ENCODE measurements at regions of chr13 and their contacts with region 1.

Region 1: GRCh38 chr13:24671386-24672107 is 8.7 kb upstream of the ATP12A start:
- DNase-seq: peak; percentile 82
- H3K4me3 ChIP-seq: peak overlapping the region in 1 of 2 experiments; percentile 28; a peak in 1 of 4 replicates
- H3K27ac ChIP-seq: no peak overlapping the region
- H3K4me1 ChIP-seq: peaks cover 0 to 7% of the 10 kb centered on the region in 2 experiments; a peak in 1 of 4 replicates
- H3K27me3 ChIP-seq: peaks cover 26% of the 10 kb centered on the region
- CTCF ChIP-seq: peak; percentile 76
- EP300 ChIP-seq: no peak
- RAD21 ChIP-seq: peak; percentile 77

Region 2: DNA sequence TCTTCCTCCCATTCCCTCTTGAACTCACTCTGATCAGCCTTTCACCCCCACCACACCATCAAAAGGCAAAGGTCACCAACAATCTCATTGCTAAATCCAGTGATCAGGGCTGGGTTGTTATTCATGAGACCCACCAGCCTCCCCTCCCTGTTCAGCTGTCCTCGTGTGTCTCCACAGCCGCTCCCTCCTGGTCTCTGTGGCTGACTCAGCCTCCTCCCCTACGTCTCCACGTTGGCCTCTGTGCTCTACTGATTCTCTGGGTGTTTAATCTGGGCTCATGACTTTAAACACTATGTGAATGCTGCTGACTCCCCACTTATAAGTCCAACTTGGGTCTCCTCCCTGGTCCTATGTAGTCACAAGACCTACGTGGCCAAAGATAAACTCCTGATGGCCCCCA is 197.9 kb before region 1 on chr13:
- CTCF ChIA-PET with region 1: no interaction called
- POLR2A ChIA-PET with region 1: no interaction called
- DNase-seq: no peak
- H3K4me3 ChIP-seq: no peak overlapping the region
- H3K27ac ChIP-seq: no peak overlapping the region
- H3K4me1 ChIP-seq: no peaks in the 10 kb centered on the region
- H3K27me3 ChIP-seq: no peaks in the 10 kb centered on the region
- CTCF ChIP-seq: no peak
- EP300 ChIP-seq: no peak
- RAD21 ChIP-seq: no peak

Region 3: GRCh38 chr13:24528816-24529398 is 142.6 kb before region 1 on chr13:
- CTCF ChIA-PET with region 1: no interaction called
- POLR2A ChIA-PET with region 1: no interaction called
- DNase-seq: no peak
- H3K4me3 ChIP-seq: no peak overlapping the region
- H3K27ac ChIP-seq: no peak overlapping the region
- H3K4me1 ChIP-seq: no peaks in the 10 kb centered on the region; a peak in 1 of 4 replicates
- H3K27me3 ChIP-seq: no peaks in the 10 kb centered on the region
- CTCF ChIP-seq: no peak
- EP300 ChIP-seq: no peak
- RAD21 ChIP-seq: no peak

Region 4: GRCh38 chr13:24654738-24655137 is 16.8 kb before region 1 on chr13:
- CTCF ChIA-PET with region 1: interaction called, 10 read pairs
- POLR2A ChIA-PET with region 1: no interaction called
- DNase-seq: no peak
- H3K4me3 ChIP-seq: no peak overlapping the region
- H3K27ac ChIP-seq: no peak overlapping the region
- H3K4me1 ChIP-seq: peaks cover 0 to 3% of the 10 kb centered on the region in 2 experiments; a peak in 1 of 4 replicates
- H3K27me3 ChIP-seq: no peaks in the 10 kb centered on the region
- CTCF ChIP-seq: no peak
- EP300 ChIP-seq: no peak
- RAD21 ChIP-seq: no peak

Region 5: DNA sequence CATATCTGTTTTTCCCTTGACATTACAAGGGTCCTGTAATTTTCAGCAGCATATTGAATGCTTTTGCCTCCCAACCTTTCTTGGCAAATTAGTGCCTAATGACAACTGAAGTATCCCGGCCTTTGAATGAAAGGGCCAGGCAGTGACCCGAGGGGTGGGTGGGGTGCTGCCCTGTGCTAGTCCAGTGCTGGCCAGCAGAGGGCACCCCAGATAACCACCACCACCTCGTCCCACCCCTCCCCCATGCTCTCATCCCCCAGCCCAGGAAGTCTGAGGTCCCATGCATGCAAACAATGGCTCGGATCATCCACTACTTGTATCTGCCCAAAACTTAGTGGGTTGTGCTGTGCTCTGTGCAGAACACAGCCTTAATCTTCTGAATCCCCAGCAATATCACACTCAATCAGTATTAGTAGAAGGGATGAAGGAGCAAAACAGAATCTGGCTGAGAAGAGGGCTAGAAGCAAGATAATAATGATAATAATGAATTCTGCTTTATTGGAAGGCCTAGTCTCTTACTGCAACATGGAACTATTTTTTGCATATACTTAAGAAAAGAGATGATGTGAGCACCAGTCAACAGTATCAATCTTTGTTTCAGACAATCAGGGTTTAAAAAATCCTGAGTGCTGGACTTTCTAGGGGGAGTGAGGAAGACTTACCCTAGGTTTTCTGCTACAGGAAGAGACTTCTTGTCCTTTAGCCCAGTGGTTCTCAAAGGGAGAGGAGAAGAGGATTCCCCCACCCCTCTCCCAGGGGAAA is 12.5 kb after region 1 on chr13:
- CTCF ChIA-PET with region 1: interaction called, 16 read pairs
- POLR2A ChIA-PET with region 1: no interaction called
- DNase-seq: peak; percentile 91
- H3K4me3 ChIP-seq: no peak overlapping the region; a peak in 1 of 4 replicates
- H3K27ac ChIP-seq: no peak overlapping the region
- H3K4me1 ChIP-seq: peaks cover 0 to 3% of the 10 kb centered on the region in 2 experiments; a peak in 2 of 4 replicates
- H3K27me3 ChIP-seq: peaks cover 38% of the 10 kb centered on the region
- CTCF ChIP-seq: peak; percentile 75
- EP300 ChIP-seq: no peak
- RAD21 ChIP-seq: peak; percentile 41; the same call in 1 of the 2 replicates

Region 6: DNA sequence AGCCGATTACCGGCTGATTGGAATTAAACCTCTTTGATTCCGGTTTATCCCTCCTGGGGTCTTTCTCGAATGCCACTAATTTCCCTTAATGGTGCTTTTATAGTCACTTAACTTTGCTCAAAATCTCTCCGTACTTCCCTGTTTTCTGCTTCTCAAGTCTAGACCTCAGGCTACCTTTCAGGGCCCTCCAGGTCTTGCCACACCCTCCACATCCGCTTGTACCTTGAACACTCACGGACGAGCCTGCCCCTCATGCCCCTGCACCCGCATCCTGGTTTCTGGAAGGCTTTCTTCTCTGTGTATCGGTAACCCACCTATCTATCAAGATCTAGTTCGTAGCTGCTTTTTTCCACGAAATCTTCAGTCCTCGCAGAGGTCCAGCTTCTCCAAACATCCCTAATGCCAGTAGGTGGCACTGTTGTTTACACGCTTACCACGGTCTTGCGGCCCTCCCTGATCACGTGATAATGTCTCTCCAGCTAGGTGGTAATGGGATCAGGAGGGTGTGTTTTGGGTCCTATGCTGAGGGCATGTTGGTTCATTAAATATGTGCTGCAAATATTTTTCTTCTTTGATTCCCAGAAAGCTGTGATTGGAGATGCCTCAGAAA is 22.4 kb after region 1 on chr13:
- CTCF ChIA-PET with region 1: interaction called, 11 read pairs
- POLR2A ChIA-PET with region 1: no interaction called
- DNase-seq: peak; percentile 84
- H3K4me3 ChIP-seq: peak overlapping the region in 1 of 2 experiments; percentile 29; a peak in 1 of 4 replicates
- H3K27ac ChIP-seq: no peak overlapping the region
- H3K4me1 ChIP-seq: no peaks in the 10 kb centered on the region; a peak in 1 of 4 replicates
- H3K27me3 ChIP-seq: peaks cover 35% of the 10 kb centered on the region; the same call in 1 of the 2 replicates
- CTCF ChIP-seq: peak; percentile 67
- EP300 ChIP-seq: no peak
- RAD21 ChIP-seq: peak; percentile 61

Region 7: DNA sequence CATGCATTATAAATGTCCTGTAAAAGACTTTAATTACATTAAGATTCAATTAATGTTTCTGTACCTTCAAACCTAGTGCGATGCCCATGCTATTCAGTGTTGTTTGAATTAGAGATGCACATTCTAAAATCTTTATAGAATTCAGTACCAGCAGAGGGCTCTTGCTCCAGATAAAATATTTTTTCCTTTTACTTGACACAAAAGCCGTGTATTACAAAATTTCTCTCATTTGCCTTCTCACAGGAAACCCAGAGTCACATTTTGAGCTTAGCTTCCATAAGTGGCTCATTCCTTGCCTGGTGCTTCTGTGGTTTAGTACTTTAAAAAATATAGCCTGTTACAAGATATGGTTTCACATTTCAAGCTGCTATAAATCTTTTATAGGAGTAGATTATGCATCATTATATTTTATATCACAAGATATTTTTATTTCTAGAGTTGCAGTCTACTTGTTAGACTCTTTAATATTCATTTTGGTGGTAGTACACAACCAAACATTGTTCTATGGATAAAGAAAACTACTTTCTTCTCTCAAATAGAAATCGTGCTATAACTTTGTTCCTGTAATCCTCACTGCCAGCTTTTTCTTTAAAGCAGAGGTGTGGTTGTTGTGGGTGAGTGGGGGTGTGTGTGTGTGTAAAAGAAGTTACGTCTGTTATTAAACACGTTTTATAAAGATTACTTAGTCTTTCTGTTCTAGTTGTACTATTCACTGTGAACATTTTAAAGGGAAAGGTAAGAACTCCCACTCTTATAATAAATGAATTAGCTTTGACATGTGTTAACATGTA is 193.8 kb after region 1 on chr13:
- CTCF ChIA-PET with region 1: no interaction called
- POLR2A ChIA-PET with region 1: no interaction called
- DNase-seq: no peak
- H3K4me3 ChIP-seq: no peak overlapping the region
- H3K27ac ChIP-seq: no peak overlapping the region
- H3K4me1 ChIP-seq: no peaks in the 10 kb centered on the region
- H3K27me3 ChIP-seq: no peaks in the 10 kb centered on the region; the same call in 1 of the 2 replicates
- CTCF ChIP-seq: peak; percentile 41
- EP300 ChIP-seq: no peak
- RAD21 ChIP-seq: peak; percentile 21; the same call in 1 of the 2 replicates

Measured in SK-N-SH (cell line).